ENCODE measurements at regions of chr17 and their contacts with region 1.

Region 1: DNA sequence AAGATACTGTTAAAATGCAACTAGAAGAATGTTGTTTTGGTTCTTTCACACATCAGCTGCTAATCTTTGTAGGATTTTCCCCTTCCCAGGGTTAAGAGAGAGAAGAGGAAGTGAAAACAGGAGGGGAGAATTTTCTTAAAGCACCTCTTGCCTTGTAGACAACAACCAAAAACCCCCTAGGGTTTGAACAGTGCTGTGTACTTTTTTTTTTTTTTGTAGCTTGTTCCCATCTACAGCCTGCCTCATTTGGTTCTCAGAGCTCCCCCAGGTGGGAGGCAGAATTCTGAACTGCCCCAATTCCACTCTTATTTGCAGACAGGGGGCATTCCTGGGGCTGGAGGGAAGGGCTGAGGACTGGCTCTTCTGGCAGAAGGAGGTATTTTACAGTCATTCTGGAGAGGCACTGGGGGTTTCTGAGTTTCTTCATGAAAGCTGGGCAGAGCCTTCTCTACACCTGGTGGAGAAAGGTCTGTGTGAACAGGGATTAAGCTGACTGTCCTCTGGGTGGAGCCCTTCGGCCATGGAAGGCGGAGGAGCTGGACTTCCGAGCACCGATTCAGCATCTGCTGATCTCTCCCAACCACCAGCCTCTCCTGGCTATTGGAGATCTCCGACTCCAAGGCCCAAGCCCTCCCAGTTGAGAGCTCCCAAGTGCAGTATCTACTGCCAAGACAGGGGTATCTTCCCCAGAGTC is 32.2 kb downstream of the SMARCE1 start:
- DNase-seq: peak; percentile 73
- ATAC-seq: peak; percentile 82
- H3K4me3 Mint-ChIP-seq: no peak overlapping the region
- H3K27ac Mint-ChIP-seq: no peak overlapping the region
- H3K4me1 Mint-ChIP-seq: peaks cover 5% of the 10 kb centered on the region
- H3K27me3 Mint-ChIP-seq: peaks cover 6% of the 10 kb centered on the region; the same call in 1 of the 2 replicates
- CTCF ChIP-seq: no peak

Region 2: DNA sequence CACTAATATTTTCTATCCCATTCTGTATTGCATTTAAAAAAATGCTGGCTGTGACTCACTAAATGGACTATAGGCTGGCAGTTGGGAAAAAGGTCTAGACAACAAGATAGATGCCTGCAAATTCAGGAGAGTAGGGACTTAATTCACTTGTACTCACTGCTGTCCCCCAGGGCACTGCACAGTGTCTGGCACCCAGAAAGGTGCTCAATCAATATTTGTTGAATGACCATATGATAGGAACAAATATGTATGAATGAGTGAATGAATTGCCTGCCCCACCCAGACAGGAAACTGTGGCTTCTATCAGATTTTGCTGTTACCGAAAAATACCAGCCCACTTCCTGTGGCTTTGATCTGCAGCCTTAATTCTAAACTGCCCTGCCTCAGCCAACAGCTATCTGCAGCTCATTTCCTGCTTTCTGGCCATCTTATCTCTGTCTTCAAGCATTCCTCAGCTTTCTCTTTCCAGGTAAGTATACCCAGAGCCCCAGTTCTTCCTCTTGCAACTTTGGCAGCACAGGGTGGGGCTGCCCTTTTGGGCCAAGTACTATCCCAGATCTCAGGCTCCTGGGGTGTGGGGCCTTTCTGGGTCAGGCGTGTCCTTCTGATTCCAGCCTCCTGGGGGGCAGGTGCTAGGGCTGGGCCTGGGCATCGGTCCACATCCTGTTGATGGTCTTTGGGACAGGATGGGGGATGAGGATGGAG is 98.7 kb before region 1 on chr17:
- CTCF ChIA-PET with region 1: no interaction called
- POLR2A ChIA-PET with region 1: no interaction called
- DNase-seq: no peak
- ATAC-seq: no peak
- H3K4me3 Mint-ChIP-seq: no peak overlapping the region
- H3K27ac Mint-ChIP-seq: no peak overlapping the region
- H3K4me1 Mint-ChIP-seq: peaks cover 24% of the 10 kb centered on the region
- H3K27me3 Mint-ChIP-seq: no peaks in the 10 kb centered on the region
- CTCF ChIP-seq: no peak

Region 3: GRCh38 chr17:40647624-40648383 is 32.4 kb after region 1 on chr17 and contains the start of gene SMARCE1:
- CTCF ChIA-PET with region 1: interaction called, 26 read pairs
- POLR2A ChIA-PET with region 1: no interaction called
- DNase-seq: peak; percentile 77
- ATAC-seq: peak; percentile 86
- H3K4me3 Mint-ChIP-seq: peak within 1 kb of the TSS; percentile 90
- H3K27ac Mint-ChIP-seq: peak within 1 kb of the TSS; percentile 99
- H3K4me1 Mint-ChIP-seq: peaks cover 14% of the 10 kb centered on the region
- H3K27me3 Mint-ChIP-seq: peaks cover 6% of the 10 kb centered on the region; the same call in 1 of the 2 replicates
- CTCF ChIP-seq: no peak
- total RNA-seq, gene SMARCE1: 109 to 114 TPM (median 114 TPM) in 3 replicates

Region 4: DNA sequence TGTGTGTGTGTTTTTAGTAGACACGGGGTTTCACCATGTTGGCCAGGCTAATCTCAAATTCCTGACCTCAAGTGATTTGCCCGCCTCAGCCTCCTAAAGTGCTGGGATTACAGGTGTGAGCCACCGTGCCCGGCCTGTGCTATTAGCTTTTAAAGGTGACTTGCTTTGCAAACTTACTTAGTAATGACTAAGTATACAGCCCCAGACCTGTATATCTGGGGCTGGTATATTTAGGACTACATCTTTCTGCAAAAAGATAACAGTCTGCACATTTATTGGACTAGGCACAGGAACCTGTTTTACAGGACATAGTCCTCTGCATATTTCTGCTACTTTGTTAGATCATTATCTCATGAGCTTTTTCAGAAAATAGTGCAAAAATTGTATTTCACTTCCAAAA is 86.8 kb after region 1 on chr17:
- CTCF ChIA-PET with region 1: interaction called, 10 read pairs
- POLR2A ChIA-PET with region 1: no interaction called
- DNase-seq: no peak
- ATAC-seq: no peak
- H3K4me3 Mint-ChIP-seq: no peak overlapping the region
- H3K27ac Mint-ChIP-seq: no peak overlapping the region
- H3K4me1 Mint-ChIP-seq: 0 out of 2 replicates have a peak, but pooled peaks cover 3% of the 10 kb centered on the region
- H3K27me3 Mint-ChIP-seq: no peaks in the 10 kb centered on the region; the same call in 1 of the 2 replicates
- CTCF ChIP-seq: no peak

Region 5: GRCh38 chr17:40791787-40792436 is 176.5 kb after region 1 on chr17:
- CTCF ChIA-PET with region 1: interaction called, 28 read pairs
- POLR2A ChIA-PET with region 1: no interaction called
- DNase-seq: no peak
- ATAC-seq: no peak; the same call in 1 of the 2 replicates
- H3K4me3 Mint-ChIP-seq: no peak overlapping the region
- H3K27ac Mint-ChIP-seq: no peak overlapping the region
- H3K4me1 Mint-ChIP-seq: no peaks in the 10 kb centered on the region
- H3K27me3 Mint-ChIP-seq: peaks cover 8% of the 10 kb centered on the region
- CTCF ChIP-seq: peak; percentile 27; the same call in 1 of the 2 replicates

Measured in WTC11 (cell line).